ENCODE measurements at regions of chr11 and their contacts with region 1.

Region 1: DNA sequence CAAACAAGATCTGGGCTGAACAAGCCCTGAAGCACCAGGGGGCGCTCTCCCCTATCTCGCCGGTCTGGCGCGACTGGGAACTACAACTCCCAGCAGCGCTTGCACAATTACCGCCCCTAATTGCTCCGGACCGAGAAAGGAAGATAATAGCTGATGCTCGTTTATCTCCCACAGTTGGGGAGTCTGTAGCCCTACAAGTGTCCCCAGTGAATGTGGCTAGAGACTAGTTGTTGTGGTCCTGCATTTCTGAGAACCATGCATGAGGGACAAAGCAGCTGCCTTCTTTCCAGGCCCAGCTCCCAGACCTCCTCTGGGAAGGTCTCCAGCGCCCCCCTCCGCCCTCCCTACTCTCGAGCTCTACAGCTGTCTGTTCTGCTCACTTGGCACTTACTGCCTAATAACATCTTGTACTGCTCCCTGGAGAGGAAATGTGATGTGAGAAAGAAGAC is 34.4 kb downstream of the NRXN2 start:
- DNase-seq: peak; percentile 87 to 95 (median 92)
- H3K4me3 ChIP-seq: peak overlapping the region; percentile 16 to 70 (median 51)
- H3K27ac ChIP-seq: peak overlapping the region; percentile 71 to 100 (median 97)
- H3K27me3 ChIP-seq: no peaks in the 10 kb centered on the region
- CTCF ChIP-seq: peak; percentile 88 to 99 (median 97)

Region 2: DNA sequence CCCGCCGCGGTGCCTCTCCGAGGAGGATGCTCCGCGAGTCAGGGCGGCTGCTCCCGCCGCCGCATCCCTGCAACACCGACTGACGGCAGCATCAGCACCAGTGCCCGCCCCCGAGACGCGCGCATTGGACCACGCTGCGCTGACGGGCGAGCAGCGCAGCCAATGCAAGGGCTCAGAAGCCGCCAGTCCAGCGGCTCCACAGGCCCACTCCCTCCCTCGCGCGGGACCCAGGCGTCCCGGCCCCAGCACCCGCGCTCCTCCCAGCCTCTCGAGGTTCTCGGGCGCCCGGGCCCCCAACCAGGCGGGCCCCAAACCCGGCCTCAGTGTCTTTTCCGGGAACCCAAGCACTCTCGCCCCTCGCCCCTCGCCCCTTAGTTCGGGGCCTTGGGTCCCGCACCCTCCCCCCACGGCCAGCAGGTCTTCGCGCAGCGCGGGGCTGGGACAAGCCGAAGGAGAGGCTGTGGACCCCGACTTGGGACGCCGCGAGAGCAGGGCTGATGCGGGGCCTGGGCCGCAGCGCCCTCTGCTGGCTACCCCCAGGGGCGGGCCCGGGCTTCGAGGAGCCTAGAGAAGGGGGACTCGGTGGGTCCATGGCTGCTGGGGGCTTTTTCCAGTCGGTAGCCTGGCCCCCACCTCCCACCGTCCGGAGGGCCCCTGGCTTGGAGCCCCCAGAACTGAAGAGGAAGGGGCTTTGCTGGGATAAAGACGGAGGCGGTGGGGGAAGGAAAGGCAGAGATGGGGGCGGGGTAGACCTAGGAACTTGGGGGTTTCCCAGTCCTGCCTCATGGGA is 34.8 kb after region 1 on chr11 and contains the start of gene NRXN2:
- intact Hi-C with region 1: loop called (anchors 1 kb)
- DNase-seq: peak; percentile 91 to 98 (median 96)
- H3K4me3 ChIP-seq: peak within 1 kb of the TSS; percentile 61 to 99 (median 83)
- H3K27ac ChIP-seq: peak within 1 kb of the TSS in 58 of 59 donors; percentile 69 to 99 (median 92)
- H3K27me3 ChIP-seq: no peaks in the 10 kb centered on the region
- CTCF ChIP-seq: peak; percentile 79 to 99 (median 96)
- total RNA-seq, gene NRXN2: 116 to 339 (median 247) TPM

Measured in dorsolateral prefrontal cortex (tissue), 120 donors.